ENCODE measurements at regions of chr20 and their contacts with region 1.

Region 1: DNA sequence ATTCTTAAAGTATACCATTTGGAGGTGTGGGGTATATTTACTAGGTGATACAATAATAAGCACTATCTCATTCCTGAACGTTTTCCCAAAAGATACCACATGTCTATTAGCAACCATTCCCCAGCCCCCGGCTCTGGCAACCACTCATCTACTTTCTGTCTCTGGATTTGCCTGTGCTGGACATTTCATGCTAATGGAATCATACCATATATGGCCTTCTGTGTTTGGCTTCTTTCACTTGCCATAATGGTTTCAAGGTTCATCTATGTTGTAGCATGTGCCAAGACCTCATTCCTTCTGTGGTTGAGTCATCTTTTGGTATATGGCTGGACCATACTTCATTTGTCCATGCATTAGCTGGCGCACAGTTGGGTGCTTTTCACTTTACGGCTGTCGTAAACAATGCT is 39.7 kb downstream of the BCAS4 start:
- DNase-seq: no peak

Region 2: DNA sequence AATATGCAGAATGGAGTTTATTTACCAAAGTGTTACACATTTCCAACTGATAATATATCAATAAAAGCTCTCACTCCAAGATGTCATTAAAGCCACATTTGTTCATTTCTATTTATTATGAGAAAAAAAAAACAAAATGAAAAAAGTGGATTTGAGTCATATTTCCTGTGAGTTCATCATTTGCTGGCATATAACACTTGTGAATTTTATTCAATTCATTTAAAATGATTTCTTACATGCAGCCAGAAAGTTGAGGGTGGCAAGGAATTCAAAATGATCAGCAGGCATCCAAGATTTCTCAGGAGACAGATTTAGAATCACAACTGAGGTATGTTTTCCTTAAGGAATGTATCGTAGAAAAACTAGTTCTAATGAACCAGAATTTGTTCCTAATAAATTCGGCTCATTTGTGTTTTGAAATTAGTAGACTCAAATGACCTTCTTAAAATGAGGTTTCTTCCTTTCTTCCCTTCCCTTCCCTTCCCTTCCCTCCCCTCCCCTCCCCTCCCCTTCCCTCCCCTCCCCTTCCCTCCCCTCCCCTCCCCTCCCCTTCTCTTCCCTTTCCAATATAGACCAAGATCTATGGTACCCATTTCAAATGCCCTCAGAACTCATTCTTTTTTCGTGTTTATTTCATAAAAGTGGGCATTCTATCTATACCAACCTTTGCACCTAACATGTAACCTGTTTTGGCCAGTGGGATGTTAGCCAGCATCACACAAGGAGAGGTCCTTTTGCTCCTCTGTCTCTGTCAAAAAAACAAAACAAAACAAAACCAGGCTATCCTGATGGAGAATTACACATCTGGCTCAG is 1779.7 kb after region 1 on chr20:
- intact Hi-C with region 1: loop called in 1 of 2 experiments (anchors 5 kb)
- DNase-seq: no peak